Ovary (tissue), 10 donors: ENCODE measurements at regions of chr6 and their contacts with region 1.

Region 1: GRCh38 chr6:35496841-35497570 is at the start of gene TEAD3:
- DNase-seq: peak; percentile 82 to 88 (median 87)
- H3K4me3 ChIP-seq: peak within 1 kb of the TSS; percentile 95
- H3K27ac ChIP-seq: peak within 1 kb of the TSS; percentile 97 to 99
- H3K4me1 ChIP-seq: peaks cover 27% of the 10 kb centered on the region
- H3K27me3 ChIP-seq: no peaks in the 10 kb centered on the region
- CTCF ChIP-seq: no peak
- EP300 ChIP-seq: no peak
- POLR2A ChIP-seq: peak; percentile 86
- total RNA-seq, gene TEAD3: 15.7 to 63.1 (median 35.6) TPM

Region 2: GRCh38 chr6:35457907-35458306 is 39.1 kb before region 1 on chr6:
- intact Hi-C with region 1: no loop called
- DNase-seq: no peak
- H3K4me3 ChIP-seq: no peak overlapping the region
- H3K27ac ChIP-seq: no peak overlapping the region
- H3K4me1 ChIP-seq: peaks cover 6% of the 10 kb centered on the region
- H3K27me3 ChIP-seq: no peaks in the 10 kb centered on the region
- CTCF ChIP-seq: no peak
- EP300 ChIP-seq: no peak
- POLR2A ChIP-seq: no peak

Region 3: DNA sequence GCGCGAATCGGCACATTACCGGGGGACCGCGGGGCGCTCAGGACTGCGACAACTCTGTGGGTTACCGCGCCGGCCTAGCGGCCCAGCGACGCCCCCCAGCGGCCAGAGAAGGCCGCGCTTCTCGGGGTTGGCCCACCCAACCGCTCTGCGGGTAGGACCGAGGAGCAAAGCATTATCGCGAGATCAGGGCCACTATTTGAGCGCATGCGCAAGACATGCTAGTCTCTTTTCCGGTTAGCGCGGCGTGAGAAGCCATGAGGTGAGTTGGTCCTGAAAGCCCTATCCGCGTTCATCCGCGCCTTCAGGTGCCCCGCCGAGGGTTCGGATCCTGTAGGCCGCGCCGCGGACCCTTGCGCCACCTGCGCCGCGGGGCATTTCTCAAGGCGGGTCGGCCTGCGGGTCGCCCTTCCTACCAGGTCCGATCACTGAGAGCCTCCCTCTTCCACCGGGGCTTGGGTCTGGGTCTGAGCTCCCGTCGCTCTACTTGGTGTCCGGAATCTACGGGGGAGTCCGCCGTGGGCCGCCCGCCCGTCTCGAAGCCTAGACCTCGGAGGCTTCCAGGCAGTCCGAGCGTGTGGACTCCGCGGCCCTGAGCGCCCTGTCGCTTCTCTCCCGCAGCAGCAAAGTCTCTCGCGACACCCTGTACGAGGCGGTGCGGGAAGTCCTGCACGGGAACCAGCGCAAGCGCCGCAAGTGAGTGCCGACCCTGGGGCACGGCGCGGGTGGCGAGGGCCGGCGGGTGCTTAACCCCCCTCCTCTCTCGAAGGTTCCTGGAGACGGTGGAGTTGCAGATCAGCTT is 28.6 kb before region 1 on chr6 and contains the start of gene RPL10A:
- intact Hi-C with region 1: loop called in 1 of 4 experiments (anchors 2 kb)
- DNase-seq: peak; percentile 96 to 98 (median 97)
- H3K4me3 ChIP-seq: peak within 1 kb of the TSS; percentile 65
- H3K27ac ChIP-seq: peak within 1 kb of the TSS; percentile 78 to 81
- H3K4me1 ChIP-seq: peaks cover 8% of the 10 kb centered on the region
- H3K27me3 ChIP-seq: no peaks in the 10 kb centered on the region
- CTCF ChIP-seq: peak; percentile 97 to 99 (median 98)
- EP300 ChIP-seq: no peak
- POLR2A ChIP-seq: peak; percentile 95
- total RNA-seq, gene RPL10A: 2,596 to 4,158 (median 3,059) TPM

Region 4: DNA sequence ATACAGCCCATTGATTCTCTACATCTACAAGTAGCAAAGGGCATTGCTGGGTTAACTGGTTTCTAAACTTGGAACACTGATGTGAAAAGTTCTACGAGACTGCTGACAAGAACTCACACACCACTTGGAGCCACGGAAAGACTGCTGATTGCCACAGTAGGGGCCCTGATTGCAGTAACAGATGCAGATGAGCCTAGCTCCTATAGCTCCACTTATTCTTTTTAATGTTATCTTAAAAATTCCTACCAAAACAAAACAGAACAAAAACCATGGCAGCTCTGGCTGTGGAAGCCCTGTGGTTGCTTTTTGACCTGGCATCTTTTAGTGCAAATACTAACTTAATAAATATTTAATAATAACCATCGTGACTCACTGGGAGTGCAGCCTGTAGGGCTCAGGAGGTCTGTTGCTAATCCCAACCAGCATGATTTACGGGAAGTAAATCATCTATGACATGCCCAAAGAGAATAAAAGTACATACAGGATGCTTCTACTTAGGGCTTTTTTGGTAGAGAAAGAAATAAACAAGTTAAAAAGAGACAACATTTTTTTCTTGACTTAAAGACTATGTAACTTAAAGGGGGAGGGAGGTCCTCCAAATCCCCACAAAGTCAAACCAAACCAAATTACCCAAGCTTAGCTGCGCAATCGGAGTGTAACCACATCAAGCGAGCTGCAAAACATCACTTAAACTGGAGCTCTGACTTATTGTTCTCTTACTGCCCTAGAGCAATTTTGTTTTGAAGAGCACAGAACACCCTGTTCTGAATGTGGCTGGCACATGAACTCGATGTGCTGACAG is 104.5 kb after region 1 on chr6:
- intact Hi-C with region 1: loop called in 1 of 4 experiments (anchors 10 kb)
- DNase-seq: peak in 4 of 5 donors; percentile 15 to 76 (median 51)
- H3K4me3 ChIP-seq: peak overlapping the region; percentile 4
- H3K27ac ChIP-seq: peak overlapping the region; percentile 62 to 86
- H3K4me1 ChIP-seq: peaks cover 28% of the 10 kb centered on the region
- H3K27me3 ChIP-seq: no peaks in the 10 kb centered on the region
- CTCF ChIP-seq: no peak
- EP300 ChIP-seq: peak; percentile 99
- POLR2A ChIP-seq: no peak